ENCODE measurements at regions of chr14 and their contacts with region 1.

Region 1: GRCh38 chr14:55731881-55732498 is 152.0 kb downstream of the KTN1 start:
- DNase-seq: peak; percentile 38 to 53 (median 49)
- H3K4me3 ChIP-seq: no peak overlapping the region
- H3K4me3 Mint-ChIP-seq: no peak overlapping the region
- H3K27ac ChIP-seq: no peak overlapping the region
- H3K27ac Mint-ChIP-seq: peak overlapping the region in 2 of 7 donors; percentile 62 to 76
- H3K4me1 ChIP-seq: peaks cover 11% of the 10 kb centered on the region
- H3K4me1 Mint-ChIP-seq: peaks cover 4 to 13% (median 7%) of the 10 kb centered on the region in 4 donors
- H3K27me3 ChIP-seq: no peaks in the 10 kb centered on the region
- H3K27me3 Mint-ChIP-seq: no peaks in the 10 kb centered on the region

Region 2: GRCh38 chr14:56339855-56340701 is 608.1 kb after region 1 on chr14:
- CTCF ChIA-PET with region 1: interaction called, 83 read pairs
- POLR2A ChIA-PET with region 1: no interaction called
- intact Hi-C with region 1: no loop called
- DNase-seq: peak in 4 of 5 donors; percentile 30 to 44 (median 36)
- H3K4me3 ChIP-seq: no peak overlapping the region
- H3K4me3 Mint-ChIP-seq: no peak overlapping the region
- H3K27ac ChIP-seq: no peak overlapping the region
- H3K27ac Mint-ChIP-seq: no peak overlapping the region
- H3K4me1 ChIP-seq: no peaks in the 10 kb centered on the region
- H3K4me1 Mint-ChIP-seq: no peaks in the 10 kb centered on the region
- H3K27me3 ChIP-seq: no peaks in the 10 kb centered on the region
- H3K27me3 Mint-ChIP-seq: no peaks in the 10 kb centered on the region

Region 3: DNA sequence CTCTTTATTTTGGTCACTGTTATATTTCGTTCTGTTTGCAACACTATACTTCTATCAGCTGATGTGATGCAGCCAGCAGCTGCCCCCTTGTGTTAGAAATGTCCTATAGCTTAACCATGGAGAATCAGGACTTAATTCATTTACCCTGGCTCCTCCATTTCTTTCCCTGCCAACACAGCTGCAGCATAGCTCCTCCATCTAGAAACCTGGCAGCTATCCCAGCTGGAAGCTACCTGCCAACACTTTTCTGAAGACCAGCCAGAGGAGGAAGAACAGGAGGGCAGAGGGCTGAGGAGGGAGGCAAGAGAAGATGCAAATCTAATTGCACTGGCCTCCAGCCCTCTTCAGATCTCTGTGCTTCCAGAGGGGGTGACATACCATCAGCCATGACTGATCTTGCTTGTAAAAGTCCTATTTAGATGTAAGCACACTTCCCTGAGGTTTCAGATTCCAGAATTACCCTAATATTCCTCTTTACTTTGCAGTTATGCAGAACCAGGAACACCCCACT is 690.8 kb after region 1 on chr14:
- CTCF ChIA-PET with region 1: interaction called, 54 read pairs
- POLR2A ChIA-PET with region 1: no interaction called
- intact Hi-C with region 1: no loop called
- DNase-seq: peak in 4 of 5 donors; percentile 17 to 35 (median 24)
- H3K4me3 ChIP-seq: no peak overlapping the region
- H3K4me3 Mint-ChIP-seq: no peak overlapping the region
- H3K27ac ChIP-seq: no peak overlapping the region
- H3K27ac Mint-ChIP-seq: no peak overlapping the region
- H3K4me1 ChIP-seq: no peaks in the 10 kb centered on the region
- H3K4me1 Mint-ChIP-seq: peaks cover 0 to 4% (median 0%) of the 10 kb centered on the region in 4 donors
- H3K27me3 ChIP-seq: no peaks in the 10 kb centered on the region
- H3K27me3 Mint-ChIP-seq: peaks cover 0 to 2% of the 10 kb centered on the region in 2 donors

Region 4: GRCh38 chr14:57317316-57317715 is 1585.3 kb after region 1 on chr14:
- CTCF ChIA-PET with region 1: no interaction called
- POLR2A ChIA-PET with region 1: no interaction called
- intact Hi-C with region 1: loop called (anchors 1 kb)
- DNase-seq: peak; percentile 65 to 73 (median 69)
- H3K4me3 ChIP-seq: no peak overlapping the region
- H3K4me3 Mint-ChIP-seq: no peak overlapping the region
- H3K27ac ChIP-seq: no peak overlapping the region
- H3K27ac Mint-ChIP-seq: no peak overlapping the region
- H3K4me1 ChIP-seq: no peaks in the 10 kb centered on the region
- H3K4me1 Mint-ChIP-seq: peaks cover 0 to 6% (median 4%) of the 10 kb centered on the region in 4 donors
- H3K27me3 ChIP-seq: no peaks in the 10 kb centered on the region
- H3K27me3 Mint-ChIP-seq: peaks cover 2 to 8% of the 10 kb centered on the region in 2 donors

Measured in CD4-positive, alpha-beta memory T cell (primary cell).